H1 (cell line): ENCODE measurements at regions of chr14 and their contacts with region 1.

Region 1: DNA sequence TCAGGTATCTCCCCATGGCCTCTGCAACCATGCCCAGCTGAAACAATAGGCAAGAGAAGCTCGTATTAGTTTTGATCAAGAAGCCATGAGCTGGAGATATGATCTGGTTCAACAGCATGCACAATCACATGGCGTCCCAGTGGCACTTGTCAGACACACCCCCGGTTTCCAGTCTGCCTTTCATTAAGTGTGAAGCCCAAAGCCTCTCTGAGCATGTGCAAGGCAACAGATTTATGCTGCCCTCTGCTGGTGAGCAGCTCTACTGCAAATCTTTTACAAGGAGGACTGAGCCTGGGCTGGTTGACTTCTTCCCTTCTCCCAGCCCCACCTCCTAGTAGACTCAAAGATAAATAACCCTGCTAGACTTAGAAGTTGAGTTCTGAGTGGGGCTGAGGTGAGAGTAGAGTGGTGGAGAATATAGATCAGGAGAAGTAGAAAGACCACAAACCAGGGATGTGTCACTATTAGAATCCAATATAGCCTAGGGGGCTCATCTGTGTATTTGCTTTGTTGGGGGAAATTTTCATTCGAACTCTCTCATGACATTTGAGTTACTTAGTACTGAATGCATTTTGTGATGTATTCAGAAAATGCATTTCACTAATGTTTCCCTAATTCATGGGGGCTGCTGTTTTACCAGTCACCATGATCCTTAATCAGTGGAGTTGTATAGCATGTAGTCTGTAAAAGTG is 53.7 kb upstream of the MBIP start:
- DNase-seq: peak; percentile 57 to 92
- H3K4me3 ChIP-seq: no peak overlapping the region
- H3K27ac ChIP-seq: no peak overlapping the region
- H3K4me1 ChIP-seq: no peaks in the 10 kb centered on the region
- H3K27me3 ChIP-seq: no peaks in the 10 kb centered on the region; a peak in 1 of 7 replicates
- CTCF ChIP-seq: peak; percentile 54 to 98 (median 88)
- EP300 ChIP-seq: no peak
- POLR2A ChIP-seq: no peak
- RAD21 ChIP-seq: peak; percentile 89 to 92

Region 2: GRCh38 chr14:36091096-36091495 is 283.0 kb before region 1 on chr14:
- CTCF ChIA-PET with region 1: interaction called, 12 read pairs
- POLR2A ChIA-PET with region 1: no interaction called
- DNase-seq: no peak
- H3K4me3 ChIP-seq: no peak overlapping the region
- H3K27ac ChIP-seq: no peak overlapping the region
- H3K4me1 ChIP-seq: no peaks in the 10 kb centered on the region
- H3K27me3 ChIP-seq: peaks cover 0 to 1% (median 0%) of the 10 kb centered on the region in 4 experiments; a peak in 1 of 7 replicates
- CTCF ChIP-seq: no peak
- EP300 ChIP-seq: no peak
- POLR2A ChIP-seq: no peak
- RAD21 ChIP-seq: no peak

Region 3: DNA sequence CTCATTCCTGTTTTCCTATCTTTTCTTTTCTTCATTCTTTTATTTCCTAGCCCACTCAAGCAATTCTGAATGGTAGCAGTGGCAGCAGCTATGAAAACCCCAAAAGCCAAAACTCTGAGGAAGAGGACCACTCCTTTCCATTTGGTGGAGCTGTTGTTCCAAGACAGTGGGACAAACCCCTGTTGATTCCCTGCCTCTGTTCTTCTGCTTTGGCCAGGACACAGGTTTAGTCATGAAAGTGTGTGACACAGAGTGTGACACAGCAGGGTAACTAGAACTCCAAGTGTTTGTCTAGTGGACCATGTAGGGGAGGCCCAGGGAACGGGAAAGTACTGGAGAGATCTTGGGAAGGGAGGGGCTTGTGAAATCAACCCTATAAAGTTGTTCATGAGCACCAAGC is 268.7 kb before region 1 on chr14:
- CTCF ChIA-PET with region 1: interaction called, 27 read pairs
- POLR2A ChIA-PET with region 1: no interaction called
- DNase-seq: peak in 1 of 2 experiments; percentile 53
- H3K4me3 ChIP-seq: no peak overlapping the region
- H3K27ac ChIP-seq: no peak overlapping the region
- H3K4me1 ChIP-seq: peaks cover 0 to 2% (median 0%) of the 10 kb centered on the region in 4 experiments; a peak in 2 of 7 replicates
- H3K27me3 ChIP-seq: no peaks in the 10 kb centered on the region
- CTCF ChIP-seq: peak; percentile 39 to 81 (median 81)
- EP300 ChIP-seq: no peak
- POLR2A ChIP-seq: no peak
- RAD21 ChIP-seq: peak; percentile 96

Region 4: GRCh38 chr14:36207500-36207899 is 166.6 kb before region 1 on chr14:
- CTCF ChIA-PET with region 1: interaction called, 19 read pairs
- POLR2A ChIA-PET with region 1: no interaction called
- DNase-seq: no peak
- H3K4me3 ChIP-seq: no peak overlapping the region
- H3K27ac ChIP-seq: no peak overlapping the region
- H3K4me1 ChIP-seq: no peaks in the 10 kb centered on the region
- H3K27me3 ChIP-seq: no peaks in the 10 kb centered on the region
- CTCF ChIP-seq: peak in 2 of 3 experiments; percentile 46 to 48; a peak in 2 of 4 replicates
- EP300 ChIP-seq: no peak
- POLR2A ChIP-seq: no peak
- RAD21 ChIP-seq: peak; percentile 71 to 72

Region 5: DNA sequence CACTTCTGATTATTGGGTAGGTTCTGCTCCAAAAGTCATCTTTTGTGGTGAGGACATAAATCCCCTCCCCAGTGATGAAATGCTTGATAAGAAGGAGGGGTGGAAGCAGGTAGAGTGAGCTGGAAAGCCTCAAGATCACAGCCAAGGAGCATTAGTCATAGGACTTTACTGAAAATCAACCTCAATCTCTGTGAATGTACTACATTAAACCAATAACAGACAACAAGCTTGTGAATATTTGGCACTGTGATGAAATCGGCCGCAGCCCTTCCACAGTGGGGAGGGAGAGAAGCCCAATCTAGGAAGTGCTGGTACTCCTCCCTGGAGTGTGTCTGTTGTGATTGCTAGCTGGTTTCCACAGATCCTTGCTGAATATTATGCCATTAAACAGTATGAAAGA is 156.4 kb before region 1 on chr14:
- CTCF ChIA-PET with region 1: interaction called, 19 read pairs
- POLR2A ChIA-PET with region 1: no interaction called
- DNase-seq: no peak
- H3K4me3 ChIP-seq: no peak overlapping the region
- H3K27ac ChIP-seq: no peak overlapping the region
- H3K4me1 ChIP-seq: peaks cover 0 to 8% (median 4%) of the 10 kb centered on the region in 4 experiments; a peak in 4 of 7 replicates
- H3K27me3 ChIP-seq: no peaks in the 10 kb centered on the region
- CTCF ChIP-seq: no peak
- EP300 ChIP-seq: no peak
- POLR2A ChIP-seq: no peak
- RAD21 ChIP-seq: no peak